ENCODE measurements at regions of chr15 and their contacts with region 1.

Region 1: DNA sequence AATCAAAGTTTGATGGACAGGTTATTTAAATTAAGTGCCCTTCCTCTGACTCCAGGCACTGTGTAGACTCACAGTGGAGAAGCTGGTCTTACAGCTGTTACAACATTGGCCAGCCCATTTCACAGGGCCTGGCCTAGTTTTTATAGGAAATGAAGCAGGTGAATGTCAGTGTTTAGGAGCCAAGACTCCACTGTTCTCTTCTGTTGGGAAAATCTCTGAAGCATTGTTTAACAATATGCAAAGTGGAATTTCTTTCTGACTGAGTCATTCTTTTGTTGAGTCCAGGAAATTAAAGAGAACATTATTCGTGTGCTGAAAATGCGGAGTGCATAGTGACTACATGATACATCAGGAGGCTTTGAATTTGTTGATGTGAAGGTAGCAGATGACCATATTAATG is 64.7 kb downstream of the ARRDC4 start:
- DNase-seq: peak; percentile 42
- H3K4me3 ChIP-seq: no peak overlapping the region
- H3K27ac ChIP-seq: peak overlapping the region; percentile 28 to 73 (median 54)
- H3K4me1 ChIP-seq: peaks cover 3 to 37% (median 27%) of the 10 kb centered on the region in 4 donors
- H3K27me3 ChIP-seq: no peaks in the 10 kb centered on the region
- CTCF ChIP-seq: no peak
- EP300 ChIP-seq: no peak
- POLR2A ChIP-seq: no peak

Region 2: DNA sequence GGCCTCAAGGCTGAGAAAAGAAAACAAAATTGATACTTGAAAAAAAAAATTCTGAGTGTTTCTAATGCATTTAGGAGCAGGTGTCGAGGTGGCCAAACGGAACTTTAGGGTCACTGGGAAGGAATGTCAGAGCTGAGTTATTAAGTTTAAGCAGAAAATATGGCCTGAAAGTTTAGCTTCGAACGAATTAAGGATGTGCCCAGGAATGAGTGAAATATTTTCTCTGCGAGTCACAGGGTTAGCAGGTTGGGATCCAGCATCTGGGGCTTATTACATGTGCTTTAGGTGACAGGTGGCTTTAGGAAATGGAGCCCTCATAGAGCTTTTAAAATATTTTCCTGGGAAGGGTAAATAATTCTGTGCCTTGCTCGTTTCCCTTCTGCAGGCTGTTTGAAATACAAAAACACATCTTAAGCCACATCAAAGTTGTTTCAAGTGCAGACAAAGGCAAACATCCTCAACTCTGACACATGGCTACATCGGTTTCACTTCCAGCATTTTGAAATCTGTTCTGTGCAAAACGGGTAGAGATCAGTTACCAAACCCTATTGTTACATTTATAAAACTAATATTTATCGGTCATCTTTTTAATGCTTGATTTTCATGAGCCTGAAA is 207.9 kb before region 1 on chr15:
- intact Hi-C with region 1: no loop called
- DNase-seq: peak; percentile 64
- H3K4me3 ChIP-seq: no peak overlapping the region
- H3K27ac ChIP-seq: no peak overlapping the region
- H3K4me1 ChIP-seq: no peaks in the 10 kb centered on the region
- H3K27me3 ChIP-seq: no peaks in the 10 kb centered on the region
- CTCF ChIP-seq: no peak
- EP300 ChIP-seq: no peak
- POLR2A ChIP-seq: no peak

Region 3: GRCh38 chr15:97960364-97961066 is 64.7 kb before region 1 on chr15 and contains the start of gene ARRDC4:
- intact Hi-C with region 1: loop called (anchors 5 kb)
- DNase-seq: peak; percentile 100
- H3K4me3 ChIP-seq: peak within 1 kb of the TSS; percentile 93 to 100 (median 98)
- H3K27ac ChIP-seq: peak within 1 kb of the TSS; percentile 93 to 99 (median 98)
- H3K4me1 ChIP-seq: peaks cover 27 to 51% (median 43%) of the 10 kb centered on the region in 4 donors
- H3K27me3 ChIP-seq: no peaks in the 10 kb centered on the region
- CTCF ChIP-seq: peak in 1 of 3 experiments; percentile 22
- EP300 ChIP-seq: no peak
- POLR2A ChIP-seq: peak; percentile 65
- total RNA-seq, gene ARRDC4: 115 to 135 (median 128) TPM

Region 4: DNA sequence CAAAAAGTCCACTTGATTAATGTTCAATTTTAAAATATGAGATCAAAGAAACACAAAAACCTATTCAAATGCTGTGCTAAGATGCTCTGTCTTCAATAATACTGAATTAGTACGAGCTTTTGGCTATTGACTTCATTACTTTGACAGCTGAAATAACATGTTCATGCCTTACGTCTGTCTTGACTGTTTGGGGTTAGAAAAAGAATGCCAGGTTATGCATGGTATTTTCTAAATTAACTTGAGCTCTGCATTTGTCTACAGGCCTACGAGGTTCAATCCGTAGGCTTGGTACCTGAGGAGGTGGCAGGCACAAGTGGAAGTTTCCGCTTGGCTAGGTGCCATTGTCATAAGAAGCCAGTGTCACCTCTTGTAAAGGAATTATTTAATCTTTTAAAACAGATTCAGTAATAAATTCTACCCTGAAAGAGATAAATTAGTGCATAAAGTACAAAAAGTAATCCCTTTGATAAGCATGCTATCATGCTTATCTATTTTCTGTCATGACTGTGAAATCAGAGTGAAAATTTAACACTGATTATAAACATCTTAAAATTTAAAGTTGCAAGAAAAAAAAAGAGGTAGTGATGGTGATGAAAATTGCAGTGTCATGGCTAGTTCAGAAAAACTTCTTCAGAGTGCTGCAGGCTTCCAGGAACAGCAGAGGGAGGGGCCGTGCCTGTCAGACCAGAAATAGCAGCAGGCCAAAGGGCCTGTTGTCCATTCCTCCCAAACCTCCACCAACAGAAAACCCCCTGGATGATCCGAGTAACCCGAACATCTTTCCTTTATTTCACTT is 51.0 kb after region 1 on chr15:
- intact Hi-C with region 1: loop called (anchors 10 kb)
- DNase-seq: no peak
- H3K4me3 ChIP-seq: no peak overlapping the region
- H3K27ac ChIP-seq: peak overlapping the region; percentile 60 to 82 (median 74)
- H3K4me1 ChIP-seq: peaks cover 17 to 27% (median 21%) of the 10 kb centered on the region in 4 donors
- H3K27me3 ChIP-seq: no peaks in the 10 kb centered on the region
- CTCF ChIP-seq: no peak
- EP300 ChIP-seq: peak; percentile 41
- POLR2A ChIP-seq: no peak

Measured in esophagus muscularis mucosa (tissue), 4 donors.